ENCODE measurements at regions of chr12 and their contacts with region 1.

Region 1: DNA sequence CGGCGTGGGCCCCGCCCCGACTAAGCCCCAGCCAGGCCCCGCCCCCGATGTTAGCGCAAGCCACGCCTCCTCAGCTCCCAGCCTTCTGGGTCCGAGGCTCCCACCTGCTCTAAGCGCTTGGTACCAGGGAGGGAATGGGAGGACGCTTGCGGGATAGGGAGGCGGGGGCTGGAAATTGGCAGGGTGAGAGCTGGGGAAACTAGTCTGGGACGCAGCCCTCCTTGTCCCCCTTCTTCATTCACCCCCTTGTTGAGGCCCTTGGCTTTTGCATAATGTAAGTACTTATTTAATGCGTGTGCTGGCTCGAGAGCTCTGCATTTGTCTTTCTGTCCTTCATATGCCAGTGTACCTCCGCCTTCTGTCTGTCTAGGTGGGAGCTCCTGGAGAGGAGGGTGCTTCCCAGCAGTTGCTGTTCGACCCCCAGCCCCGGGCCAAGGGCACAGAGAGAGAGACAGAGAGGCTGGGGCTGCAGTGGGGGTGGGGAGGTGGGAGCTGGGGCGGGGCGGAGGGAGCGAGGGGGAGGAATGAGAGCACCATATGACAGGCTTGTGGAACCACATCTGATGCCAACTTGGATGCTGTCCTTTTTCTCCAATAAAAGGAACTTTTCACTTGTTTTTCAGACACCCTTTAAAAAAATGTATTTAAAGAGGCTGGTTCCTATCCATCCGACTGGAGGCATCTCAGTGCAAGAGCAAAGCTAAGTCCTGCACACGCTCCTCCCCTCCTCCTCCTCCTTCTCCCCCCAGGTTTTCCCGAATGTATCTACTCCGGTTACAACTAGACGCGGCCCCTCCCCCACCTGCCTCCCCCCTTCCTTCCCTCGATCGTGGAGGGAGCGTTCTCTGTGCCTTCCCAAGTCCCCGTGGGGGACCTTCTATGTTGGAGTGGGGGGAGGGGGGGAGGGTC is 25.6 kb upstream of the MAP1LC3B2 start:
- DNase-seq: peak; percentile 93

Region 2: GRCh38 chr12:116299658-116300328 is 233.8 kb before region 1 on chr12:
- intact Hi-C with region 1: loop called in 1 of 2 experiments (anchors 10 kb)
- DNase-seq: no peak

Region 3: DNA sequence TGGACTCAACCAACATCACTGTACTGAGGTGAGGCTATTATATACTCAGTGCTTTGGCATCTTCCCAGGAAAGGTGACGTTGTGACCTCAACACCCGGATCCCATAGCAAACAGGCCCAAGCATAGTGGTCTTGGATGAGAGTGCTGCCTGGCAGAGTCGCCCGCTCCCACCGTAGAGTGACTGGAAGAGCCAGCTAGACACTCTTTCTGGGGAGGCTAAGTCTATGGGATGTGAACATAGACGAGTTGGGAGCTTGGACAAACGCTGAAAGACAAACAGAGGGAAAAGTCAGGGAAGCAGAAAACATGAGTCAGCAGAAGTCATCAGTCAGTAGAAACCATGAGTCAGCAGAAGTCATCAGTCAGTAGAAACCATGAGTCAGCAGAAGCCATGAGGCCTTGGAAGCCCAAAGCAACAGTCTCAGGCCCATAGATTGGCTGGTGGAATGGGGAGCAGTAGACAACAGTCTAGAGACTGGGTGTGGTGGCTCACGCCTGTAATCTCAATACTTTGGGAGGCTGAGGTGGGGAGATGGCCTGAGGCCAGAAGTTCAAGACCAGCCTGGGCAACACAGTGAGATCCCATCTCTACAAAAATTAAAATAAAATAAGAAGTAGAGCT is 40.8 kb before region 1 on chr12:
- intact Hi-C with region 1: no loop called
- DNase-seq: no peak

Measured in posterior vena cava (tissue), 2 donors.